Endothelial cell of umbilical vein (primary cell): ENCODE measurements at regions of chr15 and their contacts with region 1.

Region 1: DNA sequence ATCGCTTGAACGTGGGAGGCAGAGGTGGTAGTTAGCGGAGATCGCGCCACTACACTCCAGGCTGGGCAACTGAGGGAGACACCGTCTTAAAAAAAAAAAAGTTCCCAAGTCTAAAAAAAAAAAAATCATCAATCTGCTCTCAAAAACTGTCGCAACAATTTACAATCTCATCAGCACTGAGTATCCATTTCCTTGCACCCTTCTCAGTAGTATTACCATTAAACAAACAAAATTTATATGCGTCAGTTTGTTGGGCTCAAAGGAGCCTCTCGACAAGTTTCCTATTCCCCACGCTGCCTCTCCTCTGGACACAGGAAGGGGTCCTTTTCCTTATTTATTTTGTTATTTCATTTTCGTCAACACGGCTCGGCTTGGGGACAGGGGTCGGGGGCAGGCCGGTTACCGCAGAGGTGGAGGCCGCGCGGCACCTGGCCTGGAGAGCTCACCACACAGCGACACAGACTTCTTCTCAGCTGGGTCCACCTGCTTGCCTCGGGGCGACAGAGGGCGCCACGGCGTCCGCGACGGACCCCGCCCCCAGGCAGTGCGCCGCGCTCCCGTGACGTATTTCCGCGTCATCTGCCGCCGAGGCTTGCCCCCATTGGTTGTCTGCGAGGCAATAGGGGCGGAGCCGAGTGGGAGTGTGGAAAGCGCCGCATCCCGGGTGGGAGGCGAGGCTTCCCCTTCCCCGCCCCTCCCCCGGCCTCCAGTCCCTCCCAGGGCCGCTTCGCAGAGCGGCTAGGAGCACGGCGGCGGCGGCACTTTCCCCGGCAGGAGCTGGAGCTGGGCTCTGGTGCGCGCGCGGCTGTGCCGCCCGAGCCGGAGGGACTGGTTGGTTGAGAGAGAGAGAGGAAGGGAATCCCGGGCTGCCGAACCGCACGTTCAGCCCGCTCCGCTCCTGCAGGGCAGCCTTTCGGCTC is at the start of gene MAP2K1:
- DNase-seq: peak; percentile 98
- H3K4me3 ChIP-seq: peak within 1 kb of the TSS; percentile 78 to 93 (median 81)
- H3K27ac ChIP-seq: peak within 1 kb of the TSS; percentile 83
- H3K4me1 ChIP-seq: peaks cover 31% of the 10 kb centered on the region
- H3K27me3 ChIP-seq: no peaks in the 10 kb centered on the region
- CTCF ChIP-seq: peak; percentile 66 to 94
- POLR2A ChIP-seq: peak; percentile 46
- total RNA-seq, gene MAP2K1: 45.1 and 45.5 TPM in 2 replicates

Region 2: GRCh38 chr15:66293419-66294156 is 92.9 kb before region 1 on chr15 and contains the start of gene DIS3L:
- CTCF ChIA-PET with region 1: no interaction called
- POLR2A ChIA-PET with region 1: no interaction called
- dilution Hi-C with region 1: no loop called
- intact Hi-C with region 1: loop called (anchors 2 kb)
- DNase-seq: peak; percentile 53
- H3K4me3 ChIP-seq: peak within 1 kb of the TSS; percentile 69 to 78 (median 76)
- H3K27ac ChIP-seq: peak within 1 kb of the TSS; percentile 71
- H3K4me1 ChIP-seq: peaks cover 30% of the 10 kb centered on the region
- H3K27me3 ChIP-seq: no peaks in the 10 kb centered on the region
- CTCF ChIP-seq: no peak
- POLR2A ChIP-seq: peak; percentile 59
- total RNA-seq, gene DIS3L: 21.6 and 27.9 TPM in 2 replicates

Region 3: GRCh38 chr15:66356345-66357236 is 29.9 kb before region 1 on chr15 and contains the start of gene TIPIN:
- CTCF ChIA-PET with region 1: interaction called, 5 read pairs
- POLR2A ChIA-PET with region 1: no interaction called
- dilution Hi-C with region 1: no loop called
- intact Hi-C with region 1: loop called (anchors 1 kb)
- DNase-seq: peak; percentile 97
- H3K4me3 ChIP-seq: peak within 1 kb of the TSS; percentile 33 to 82 (median 65)
- H3K27ac ChIP-seq: peak within 1 kb of the TSS; percentile 58
- H3K4me1 ChIP-seq: peaks cover 6% of the 10 kb centered on the region
- H3K27me3 ChIP-seq: no peaks in the 10 kb centered on the region
- CTCF ChIP-seq: no peak
- POLR2A ChIP-seq: peak; percentile 81
- total RNA-seq, gene TIPIN: 15.4 and 16.2 TPM in 2 replicates

Region 4: GRCh38 chr15:66369773-66370651 is 16.5 kb before region 1 on chr15:
- CTCF ChIA-PET with region 1: interaction called, 9 read pairs
- POLR2A ChIA-PET with region 1: interaction called, 6 read pairs
- dilution Hi-C with region 1: no loop called
- intact Hi-C with region 1: loop called (anchors 1 kb)
- DNase-seq: peak; percentile 92
- H3K4me3 ChIP-seq: peak overlapping the region; percentile 22 to 70 (median 41)
- H3K27ac ChIP-seq: peak overlapping the region; percentile 100
- H3K4me1 ChIP-seq: peaks cover 17% of the 10 kb centered on the region
- H3K27me3 ChIP-seq: no peaks in the 10 kb centered on the region
- CTCF ChIP-seq: no peak
- POLR2A ChIP-seq: peak; percentile 32

Region 5: DNA sequence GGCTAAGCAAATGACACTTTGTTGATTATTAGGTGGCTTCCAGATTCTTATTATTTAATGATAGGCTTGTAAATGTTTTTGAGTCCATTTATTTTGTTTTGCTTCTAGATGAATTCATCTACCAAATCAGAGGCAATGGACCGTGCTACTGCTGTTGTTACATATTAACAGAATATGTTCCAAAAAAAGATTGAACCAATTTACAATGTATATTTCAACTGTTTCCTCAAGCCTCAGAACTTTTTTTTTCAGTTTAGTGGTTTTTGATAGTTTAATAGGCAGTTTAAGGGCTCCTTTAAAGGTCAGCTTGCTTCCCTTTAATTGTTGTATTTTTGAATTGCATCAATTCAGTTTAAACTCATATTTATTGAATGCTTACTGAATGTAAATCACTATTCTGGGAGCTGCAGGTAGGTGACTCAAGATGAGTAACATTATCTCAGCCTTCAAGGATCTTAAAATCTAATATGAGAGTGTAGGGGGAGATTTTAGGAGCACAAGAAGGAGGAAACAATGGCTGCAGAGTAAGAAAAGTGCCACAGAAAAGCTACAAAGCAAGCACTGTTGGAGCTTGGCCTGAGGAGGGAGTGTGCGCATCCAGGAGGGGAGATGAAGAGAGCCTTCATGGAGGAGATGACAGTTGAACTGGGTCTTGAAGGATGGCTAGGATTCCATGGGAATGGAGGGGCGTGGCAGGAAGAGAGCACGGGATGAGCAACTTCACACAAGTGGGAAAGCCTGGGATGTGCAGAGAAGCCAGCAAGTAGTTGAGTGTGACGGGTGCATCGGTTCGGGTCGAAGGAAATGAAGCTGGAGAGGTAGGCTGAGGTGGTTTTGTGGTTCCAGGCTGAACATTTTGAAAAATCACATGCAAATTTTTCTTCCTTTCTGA is 14.9 kb after region 1 on chr15:
- CTCF ChIA-PET with region 1: interaction called, 51 read pairs
- POLR2A ChIA-PET with region 1: interaction called, 3 read pairs
- dilution Hi-C with region 1: no loop called
- intact Hi-C with region 1: loop called (anchors 1 kb)
- DNase-seq: no peak
- H3K4me3 ChIP-seq: no peak overlapping the region
- H3K27ac ChIP-seq: no peak overlapping the region
- H3K4me1 ChIP-seq: peaks cover 31% of the 10 kb centered on the region
- H3K27me3 ChIP-seq: no peaks in the 10 kb centered on the region
- CTCF ChIP-seq: no peak
- POLR2A ChIP-seq: no peak

Region 6: DNA sequence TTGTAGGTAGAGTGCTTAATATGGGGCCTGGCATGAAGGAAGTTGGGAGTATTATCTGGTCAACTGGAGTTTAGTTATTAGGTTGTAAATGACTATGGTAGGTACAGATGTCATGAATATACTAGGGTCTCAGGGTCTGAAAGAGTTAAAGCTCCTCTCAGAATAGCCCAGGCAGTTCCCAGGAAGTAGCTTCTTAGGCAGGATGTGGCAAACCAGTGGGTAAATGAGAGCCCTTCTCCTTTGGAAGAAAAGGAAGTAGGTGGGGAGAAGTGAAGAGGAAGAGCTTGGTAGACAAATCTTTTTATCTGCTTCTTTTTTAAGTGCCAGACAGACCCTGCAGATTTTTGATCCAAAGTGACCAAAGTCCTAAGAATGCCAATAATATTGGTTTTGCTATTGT is 24.7 kb after region 1 on chr15:
- CTCF ChIA-PET with region 1: interaction called, 51 read pairs
- POLR2A ChIA-PET with region 1: interaction called, 7 read pairs
- dilution Hi-C with region 1: no loop called
- intact Hi-C with region 1: no loop called
- DNase-seq: no peak
- H3K4me3 ChIP-seq: no peak overlapping the region
- H3K27ac ChIP-seq: no peak overlapping the region
- H3K4me1 ChIP-seq: peaks cover 15% of the 10 kb centered on the region
- H3K27me3 ChIP-seq: no peaks in the 10 kb centered on the region
- CTCF ChIP-seq: no peak
- POLR2A ChIP-seq: no peak

Region 7: DNA sequence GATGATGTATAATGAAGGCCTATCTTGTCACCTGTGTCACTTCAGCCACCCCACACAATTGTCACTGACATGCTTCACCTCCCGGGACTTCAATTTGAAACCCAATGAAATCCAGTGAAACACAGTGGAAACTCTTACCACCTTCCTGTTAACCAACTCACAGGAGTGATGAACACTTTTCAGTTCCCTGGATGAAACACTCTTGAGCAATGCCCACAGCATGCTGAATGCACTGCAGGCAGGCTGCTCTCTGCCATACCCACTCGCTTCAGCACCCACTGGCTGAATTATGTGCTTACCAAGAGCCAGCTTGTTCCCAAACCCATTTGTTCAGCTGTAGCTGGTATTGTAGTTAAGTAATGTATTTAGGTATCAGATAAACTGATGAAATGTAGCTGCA is 47.3 kb after region 1 on chr15:
- CTCF ChIA-PET with region 1: interaction called, 10 read pairs
- POLR2A ChIA-PET with region 1: no interaction called
- dilution Hi-C with region 1: no loop called
- intact Hi-C with region 1: no loop called
- DNase-seq: no peak
- H3K4me3 ChIP-seq: no peak overlapping the region
- H3K27ac ChIP-seq: no peak overlapping the region
- H3K4me1 ChIP-seq: no peaks in the 10 kb centered on the region
- H3K27me3 ChIP-seq: no peaks in the 10 kb centered on the region
- CTCF ChIP-seq: no peak
- POLR2A ChIP-seq: no peak

Region 8: DNA sequence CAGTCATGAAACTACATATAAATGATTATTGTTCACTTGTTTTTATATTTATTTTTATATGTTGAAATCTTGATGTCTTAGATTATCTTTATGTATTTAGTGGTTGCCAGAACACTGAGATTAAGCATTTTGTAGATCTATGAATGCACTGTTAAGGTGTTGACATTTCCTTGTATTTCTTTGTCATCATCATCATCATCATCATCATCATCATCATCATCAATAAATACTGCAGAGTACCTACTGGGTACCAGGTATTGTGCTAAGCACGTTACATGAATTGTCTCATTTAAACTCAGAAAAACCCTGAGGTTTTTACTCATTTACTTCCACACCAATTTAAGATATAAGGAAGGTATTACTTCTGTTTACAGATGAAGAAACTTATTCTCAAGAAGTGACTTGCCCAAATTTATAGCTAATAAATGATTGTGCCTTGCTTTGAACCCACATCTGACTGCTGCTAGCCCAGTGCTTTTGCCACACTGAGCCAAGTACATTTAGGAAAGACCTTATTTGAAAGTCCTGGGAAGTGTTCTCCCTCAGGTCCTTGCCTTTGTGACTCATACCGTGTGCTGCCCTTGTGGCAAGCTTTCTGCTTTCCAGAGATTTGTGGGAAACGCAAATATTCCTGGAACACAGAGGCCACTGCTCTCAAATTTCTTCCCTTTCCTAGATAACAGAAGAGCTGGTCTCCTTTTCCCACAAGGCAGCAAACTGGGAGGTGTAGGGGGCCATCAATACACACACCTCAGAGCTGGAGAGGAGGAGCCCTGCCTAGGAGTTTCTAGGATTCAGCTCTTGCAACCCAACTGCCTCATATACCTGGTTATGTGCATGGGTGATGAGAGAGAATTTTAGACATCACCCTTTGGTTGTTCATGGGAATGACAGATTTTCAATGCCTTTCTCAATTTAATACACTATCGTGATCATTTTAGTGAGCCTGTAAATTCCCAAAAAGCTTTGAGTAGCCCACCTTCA is 1019.0 kb after region 1 on chr15:
- CTCF ChIA-PET with region 1: no interaction called
- POLR2A ChIA-PET with region 1: no interaction called
- dilution Hi-C with region 1: no loop called
- intact Hi-C with region 1: no loop called
- DNase-seq: no peak
- H3K4me3 ChIP-seq: no peak overlapping the region
- H3K27ac ChIP-seq: no peak overlapping the region
- H3K4me1 ChIP-seq: no peaks in the 10 kb centered on the region
- H3K27me3 ChIP-seq: peaks cover 0 to 3% of the 10 kb centered on the region in 2 experiments
- CTCF ChIP-seq: no peak
- POLR2A ChIP-seq: no peak